ENCODE measurements at regions of chr7 and their contacts with region 1.

Region 1: DNA sequence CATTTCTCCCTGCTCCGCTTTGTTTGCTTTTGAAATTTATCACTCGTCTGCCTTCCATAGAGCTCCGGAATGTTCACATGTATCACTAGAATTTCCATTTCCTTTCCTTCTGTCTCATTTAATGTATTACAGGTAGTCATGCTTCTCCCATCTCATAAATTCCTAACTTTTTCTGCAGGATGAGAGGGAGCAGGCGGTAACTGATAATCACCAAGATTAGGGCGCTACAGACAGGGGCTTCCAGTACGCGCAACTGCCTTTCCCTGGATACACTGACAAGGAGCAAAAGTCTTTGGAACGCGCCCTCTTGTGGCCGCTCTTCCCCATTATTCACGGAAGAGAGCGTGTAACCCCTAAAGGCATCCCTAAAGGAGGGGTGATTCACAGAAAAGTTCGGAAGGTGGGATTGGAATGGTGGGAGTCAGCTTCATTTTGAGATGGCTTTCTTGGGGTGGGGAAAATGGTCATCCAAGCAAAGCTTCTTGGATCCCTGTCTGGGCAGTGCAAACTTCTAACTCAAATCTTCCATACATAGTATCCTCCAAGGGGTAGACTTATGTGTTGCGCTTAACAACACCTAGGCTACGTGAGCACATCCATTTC is 6.5 kb downstream of the INHBA start:
- DNase-seq: peak; percentile 85

Region 2: GRCh38 chr7:41003031-41003925 is 693.1 kb before region 1 on chr7:
- intact Hi-C with region 1: loop called (anchors 5 kb)
- DNase-seq: no peak

Region 3: GRCh38 chr7:41045556-41046123 is 650.8 kb before region 1 on chr7:
- intact Hi-C with region 1: loop called (anchors 2 kb)
- DNase-seq: no peak

Region 4: DNA sequence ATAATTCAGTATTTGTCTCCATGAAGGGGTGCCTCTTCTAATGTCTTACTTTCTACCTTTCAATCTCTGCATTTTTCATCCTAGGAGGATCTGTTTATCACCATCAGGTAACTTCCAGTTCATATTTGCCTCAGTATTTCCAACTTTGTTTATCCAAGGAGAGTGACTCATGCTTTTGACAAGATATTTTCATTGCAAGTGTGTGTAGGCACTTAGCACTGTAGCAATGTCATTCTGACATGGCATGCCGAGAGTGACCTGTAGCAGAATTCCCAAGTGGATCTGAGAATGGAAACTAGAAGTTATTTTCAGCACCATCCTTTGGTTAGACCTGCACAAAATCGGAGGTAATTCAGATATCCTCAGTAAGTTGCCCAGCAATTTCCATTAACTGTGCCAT is 123.4 kb before region 1 on chr7:
- intact Hi-C with region 1: loop called (anchors 5 kb)
- DNase-seq: no peak

Region 5: GRCh38 chr7:41630741-41631140 is 65.7 kb before region 1 on chr7:
- intact Hi-C with region 1: loop called (anchors 2 kb)
- DNase-seq: no peak

Region 6: GRCh38 chr7:41731492-41732435 is 35.3 kb after region 1 on chr7:
- intact Hi-C with region 1: no loop called
- DNase-seq: no peak

Measured in cardiac septum (tissue), 1 donor.